ENCODE measurements at regions of chr15 and their contacts with region 1.

Region 1: GRCh38 chr15:89496155-89497098 is at the start of gene RHCG:
- DNase-seq: peak; percentile 84
- ATAC-seq: peak; percentile 91
- H3K4me3 Mint-ChIP-seq: peak within 1 kb of the TSS; percentile 67
- H3K27ac Mint-ChIP-seq: no peak within 1 kb of the TSS
- H3K4me1 Mint-ChIP-seq: 0 out of 2 replicates have a peak, but pooled peaks cover 3% of the 10 kb centered on the region
- H3K27me3 Mint-ChIP-seq: peaks cover 38% of the 10 kb centered on the region
- CTCF ChIP-seq: no peak
- total RNA-seq, gene RHCG: 0.23 to 0.37 TPM (median 0.31 TPM) in 3 replicates

Region 2: GRCh38 chr15:89430530-89431341 is 65.7 kb before region 1 on chr15:
- CTCF ChIA-PET with region 1: interaction called, 10 read pairs
- POLR2A ChIA-PET with region 1: no interaction called
- DNase-seq: peak; percentile 96
- ATAC-seq: peak; percentile 95
- H3K4me3 Mint-ChIP-seq: peak overlapping the region; percentile 72
- H3K27ac Mint-ChIP-seq: no peak overlapping the region
- H3K4me1 Mint-ChIP-seq: peaks cover 15% of the 10 kb centered on the region
- H3K27me3 Mint-ChIP-seq: peaks cover 32% of the 10 kb centered on the region
- CTCF ChIP-seq: peak; percentile 100

Region 3: GRCh38 chr15:89457097-89457496 is 39.3 kb before region 1 on chr15:
- CTCF ChIA-PET with region 1: no interaction called
- POLR2A ChIA-PET with region 1: no interaction called
- DNase-seq: no peak
- ATAC-seq: peak; percentile 83
- H3K4me3 Mint-ChIP-seq: no peak overlapping the region
- H3K27ac Mint-ChIP-seq: no peak overlapping the region
- H3K4me1 Mint-ChIP-seq: peaks cover 12% of the 10 kb centered on the region
- H3K27me3 Mint-ChIP-seq: peaks cover 89% of the 10 kb centered on the region
- CTCF ChIP-seq: no peak

Region 4: GRCh38 chr15:89531796-89532537 is 35.5 kb after region 1 on chr15:
- CTCF ChIA-PET with region 1: interaction called, 14 read pairs
- POLR2A ChIA-PET with region 1: no interaction called
- DNase-seq: no peak
- ATAC-seq: peak; percentile 50
- H3K4me3 Mint-ChIP-seq: no peak overlapping the region
- H3K27ac Mint-ChIP-seq: no peak overlapping the region
- H3K4me1 Mint-ChIP-seq: peaks cover 7% of the 10 kb centered on the region
- H3K27me3 Mint-ChIP-seq: peaks cover 21% of the 10 kb centered on the region
- CTCF ChIP-seq: no peak

Region 5: DNA sequence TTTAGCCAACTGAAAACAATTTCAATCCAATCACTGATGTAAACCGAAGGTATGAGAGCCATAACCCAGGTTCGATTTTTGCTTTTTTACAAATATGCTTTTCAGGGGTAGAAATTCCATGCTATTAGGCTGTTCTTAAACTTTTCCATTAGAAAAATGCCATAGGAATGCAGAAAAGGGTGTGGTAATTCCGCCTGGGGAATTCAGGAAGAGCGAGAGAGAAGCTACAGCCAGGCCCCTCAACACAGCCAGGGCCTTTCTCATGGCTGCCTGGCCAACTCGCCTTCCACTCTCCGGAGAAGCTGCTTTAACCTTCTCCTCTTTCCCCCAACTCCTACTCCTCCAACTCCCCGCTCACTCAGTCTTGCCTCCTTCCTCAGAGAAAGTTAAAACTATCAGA is 69.7 kb after region 1 on chr15:
- CTCF ChIA-PET with region 1: interaction called, 12 read pairs
- POLR2A ChIA-PET with region 1: no interaction called
- DNase-seq: no peak
- ATAC-seq: no peak; the same call in 1 of the 2 replicates
- H3K4me3 Mint-ChIP-seq: no peak overlapping the region
- H3K27ac Mint-ChIP-seq: no peak overlapping the region
- H3K4me1 Mint-ChIP-seq: 0 out of 2 replicates have a peak, but pooled peaks cover 2% of the 10 kb centered on the region
- H3K27me3 Mint-ChIP-seq: peaks cover 3% of the 10 kb centered on the region; the same call in 1 of the 2 replicates
- CTCF ChIP-seq: no peak